ENCODE measurements at regions of chr10 and their contacts with region 1.

Region 1: DNA sequence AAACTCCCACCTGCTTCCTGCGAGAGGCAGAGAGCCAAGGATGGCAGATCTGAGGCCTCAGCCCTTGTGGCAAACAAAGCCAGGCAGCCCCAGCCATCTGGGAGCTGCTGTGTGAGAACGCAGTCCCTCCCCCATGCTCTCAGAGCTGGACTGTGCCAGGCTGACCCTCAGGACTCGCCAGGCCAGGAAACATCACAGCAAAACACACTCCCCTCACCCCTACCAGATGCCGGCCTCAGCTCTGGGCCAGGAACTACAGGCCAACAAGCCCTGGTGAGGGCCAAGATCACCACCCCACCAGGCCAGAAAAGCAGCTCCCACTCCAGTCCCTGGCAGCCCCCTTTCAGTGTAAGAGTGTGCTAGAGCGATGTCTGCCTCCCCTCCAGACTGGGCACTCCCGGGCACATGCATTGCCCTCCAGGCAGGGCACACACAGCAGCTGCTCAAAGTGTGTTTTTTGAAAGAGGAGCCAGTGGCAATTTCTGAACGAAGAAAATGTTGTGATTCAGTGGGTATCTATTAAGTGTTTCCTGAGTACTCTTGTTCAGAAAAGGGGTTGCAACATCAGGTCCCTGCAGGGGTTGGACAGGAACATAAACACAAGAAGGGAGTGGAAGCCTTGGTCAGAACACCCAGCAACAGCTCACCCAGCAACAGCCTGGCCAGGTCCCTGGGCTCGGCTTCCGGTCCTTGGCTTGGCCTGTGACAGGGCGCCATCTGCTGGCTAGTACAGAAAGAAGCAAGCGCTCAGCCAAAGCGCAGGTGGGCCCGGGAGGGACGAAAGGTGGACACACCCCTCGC is 18.3 kb downstream of the LRRC20 start:
- DNase-seq: peak; percentile 88
- ATAC-seq: peak; percentile 97
- H3K4me3 ChIP-seq: no peak overlapping the region
- H3K4me3 Mint-ChIP-seq: no peak overlapping the region
- H3K27ac ChIP-seq: no peak overlapping the region
- H3K27ac Mint-ChIP-seq: no peak overlapping the region
- H3K4me1 ChIP-seq: peaks cover 2 to 11% of the 10 kb centered on the region in 2 donors
- H3K4me1 Mint-ChIP-seq: peaks cover 10% of the 10 kb centered on the region
- H3K27me3 ChIP-seq: no peaks in the 10 kb centered on the region
- H3K27me3 Mint-ChIP-seq: peaks cover 3% of the 10 kb centered on the region
- CTCF ChIP-seq: peak; percentile 85

Region 2: DNA sequence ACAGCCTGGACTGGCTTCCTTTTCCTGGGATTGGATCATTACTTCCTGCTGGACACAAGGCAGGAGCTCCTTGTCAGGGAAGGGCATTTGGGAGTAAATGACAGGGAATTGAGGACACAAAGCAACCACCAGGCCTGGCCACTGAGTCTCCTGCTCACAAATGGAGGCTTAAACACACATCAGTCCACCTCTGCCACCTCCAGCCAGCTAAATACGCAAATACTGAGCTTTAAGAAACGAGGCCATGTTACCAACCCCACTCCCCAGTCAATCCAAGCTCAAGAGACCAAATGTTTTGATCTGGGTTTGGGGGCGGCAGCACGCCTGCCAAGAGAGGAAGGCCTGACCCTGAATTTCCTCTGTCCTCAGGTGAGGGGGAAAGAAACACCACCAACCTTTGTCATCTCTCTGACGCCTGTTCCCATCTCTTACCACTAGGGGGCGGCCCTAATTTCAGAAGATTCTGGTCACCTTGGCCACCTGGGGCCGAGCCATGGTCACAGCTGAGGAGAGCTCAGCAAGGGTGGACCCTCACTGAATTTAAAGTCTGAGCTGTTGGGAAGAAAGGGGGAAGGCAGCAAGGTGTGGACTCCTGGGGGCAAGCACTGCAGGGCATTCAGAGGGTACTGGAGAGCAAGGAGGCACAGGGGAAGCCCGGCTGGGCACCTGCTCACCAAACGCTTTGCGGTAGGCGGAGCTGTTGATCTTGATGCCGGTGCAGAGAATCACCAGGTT is 248.1 kb before region 1 on chr10:
- CTCF ChIA-PET with region 1: interaction called, 10 read pairs
- POLR2A ChIA-PET with region 1: no interaction called
- intact Hi-C with region 1: no loop called
- DNase-seq: peak; percentile 71
- ATAC-seq: peak; percentile 83
- H3K4me3 ChIP-seq: no peak overlapping the region
- H3K4me3 Mint-ChIP-seq: no peak overlapping the region
- H3K27ac ChIP-seq: no peak overlapping the region
- H3K27ac Mint-ChIP-seq: no peak overlapping the region
- H3K4me1 ChIP-seq: peaks cover 0 to 4% of the 10 kb centered on the region in 2 donors
- H3K4me1 Mint-ChIP-seq: peaks cover 6% of the 10 kb centered on the region
- H3K27me3 ChIP-seq: no peaks in the 10 kb centered on the region
- H3K27me3 Mint-ChIP-seq: no peaks in the 10 kb centered on the region
- CTCF ChIP-seq: peak; percentile 98

Region 3: DNA sequence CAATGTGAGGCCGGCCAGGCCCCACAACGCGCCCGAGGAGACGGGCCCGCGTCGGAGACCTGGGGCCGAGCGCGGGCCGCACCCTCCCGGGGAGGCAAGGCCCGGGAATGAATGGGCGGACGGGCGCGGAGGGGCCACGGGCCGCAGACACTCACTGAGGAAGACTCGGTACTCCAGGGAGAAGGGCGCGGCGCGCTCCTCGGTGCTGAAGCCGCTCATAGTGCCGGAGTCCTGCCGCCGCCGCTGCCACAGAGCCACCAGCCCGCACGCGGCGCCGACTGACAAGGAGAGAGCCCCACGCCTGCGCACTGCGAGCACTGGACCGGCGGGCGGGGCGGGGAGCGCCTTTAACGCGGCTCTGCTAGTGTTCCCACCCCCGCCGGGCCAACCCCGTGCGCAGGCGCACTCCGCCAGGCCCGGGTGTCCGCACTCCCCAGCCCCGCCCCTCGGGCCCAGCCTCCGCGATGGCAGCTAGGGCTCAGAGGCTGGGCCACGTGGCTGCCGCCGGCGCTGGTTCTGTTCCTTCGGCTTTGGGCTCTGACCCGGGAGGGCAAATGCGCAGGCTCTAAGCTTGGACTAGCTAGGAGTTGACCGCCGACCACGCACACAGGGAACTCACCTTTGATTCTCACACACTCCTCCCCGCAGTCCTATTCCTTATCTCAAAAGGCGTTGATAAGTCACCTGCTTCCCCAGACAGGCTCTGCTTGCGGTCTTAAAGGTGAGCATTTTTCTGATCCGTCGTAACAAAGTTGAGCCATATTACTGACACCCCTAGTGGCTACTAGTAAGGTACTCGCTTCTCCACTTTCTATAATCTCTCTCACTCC is 130.8 kb before region 1 on chr10 and contains the start of gene PPA1:
- CTCF ChIA-PET with region 1: interaction called, 778 read pairs
- POLR2A ChIA-PET with region 1: no interaction called
- intact Hi-C with region 1: loop called (anchors 1 kb)
- DNase-seq: peak; percentile 98
- ATAC-seq: peak; percentile 97
- H3K4me3 ChIP-seq: peak within 1 kb of the TSS; percentile 50 to 95 (median 87)
- H3K4me3 Mint-ChIP-seq: peak within 1 kb of the TSS; percentile 92
- H3K27ac ChIP-seq: peak within 1 kb of the TSS; percentile 75 to 77
- H3K27ac Mint-ChIP-seq: peak within 1 kb of the TSS; percentile 93
- H3K4me1 ChIP-seq: peaks cover 7 to 18% of the 10 kb centered on the region in 2 donors
- H3K4me1 Mint-ChIP-seq: peaks cover 13% of the 10 kb centered on the region
- H3K27me3 ChIP-seq: no peaks in the 10 kb centered on the region
- H3K27me3 Mint-ChIP-seq: no peaks in the 10 kb centered on the region
- CTCF ChIP-seq: peak; percentile 49
- total RNA-seq, gene PPA1: 39.4 and 40.6 TPM in 2 replicates

Region 4: DNA sequence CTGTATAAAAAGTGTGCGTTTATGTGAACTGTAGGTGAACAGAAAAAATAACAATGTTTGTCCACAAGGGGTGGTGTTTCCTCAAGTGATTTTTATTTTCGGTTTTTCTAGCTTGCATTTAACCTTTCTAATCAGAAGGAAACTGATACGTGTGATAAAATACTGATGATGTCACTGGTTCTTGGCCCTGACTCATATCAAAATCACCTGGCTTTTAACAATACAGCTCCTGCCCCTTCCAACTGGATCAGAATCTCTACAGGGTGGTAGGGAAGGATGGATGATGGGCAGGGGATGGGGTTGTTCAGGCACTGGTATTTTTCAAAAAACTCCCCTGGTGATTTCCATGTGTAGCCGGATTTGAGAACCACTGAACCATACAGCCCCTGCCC is 91.2 kb before region 1 on chr10:
- CTCF ChIA-PET with region 1: interaction called, 185 read pairs
- POLR2A ChIA-PET with region 1: no interaction called
- intact Hi-C with region 1: loop called (anchors 1 kb)
- DNase-seq: peak; percentile 65
- ATAC-seq: peak; percentile 67
- H3K4me3 ChIP-seq: peak overlapping the region in 1 of 5 experiments; percentile 44
- H3K4me3 Mint-ChIP-seq: peak overlapping the region; percentile 54
- H3K27ac ChIP-seq: no peak overlapping the region
- H3K27ac Mint-ChIP-seq: peak overlapping the region; percentile 57
- H3K4me1 ChIP-seq: peaks cover 6 to 11% of the 10 kb centered on the region in 2 donors
- H3K4me1 Mint-ChIP-seq: peaks cover 15% of the 10 kb centered on the region
- H3K27me3 ChIP-seq: no peaks in the 10 kb centered on the region
- H3K27me3 Mint-ChIP-seq: no peaks in the 10 kb centered on the region
- CTCF ChIP-seq: peak; percentile 71

Region 5: DNA sequence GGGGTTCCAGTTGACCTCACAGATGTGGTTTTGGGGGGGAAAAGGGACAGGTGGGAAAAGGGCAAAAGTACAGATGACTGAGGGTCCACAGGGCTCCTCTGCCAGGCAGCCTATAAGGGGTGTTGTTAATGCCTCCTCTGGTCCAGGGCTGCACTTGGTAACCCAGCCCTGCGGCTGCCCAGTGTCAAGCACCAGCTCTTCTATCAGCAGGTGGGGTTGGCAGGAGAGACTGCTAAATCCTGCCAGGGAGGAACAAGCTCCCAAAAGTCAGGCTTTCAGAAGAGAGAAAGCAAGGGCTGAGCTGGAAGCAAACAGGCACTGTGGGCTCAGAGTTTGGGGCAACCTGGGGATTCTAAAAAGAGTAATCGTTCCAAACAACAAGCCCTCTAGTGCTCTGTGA is 20.9 kb before region 1 on chr10:
- CTCF ChIA-PET with region 1: interaction called, 14 read pairs
- POLR2A ChIA-PET with region 1: no interaction called
- intact Hi-C with region 1: no loop called
- DNase-seq: no peak
- ATAC-seq: no peak
- H3K4me3 ChIP-seq: no peak overlapping the region
- H3K4me3 Mint-ChIP-seq: no peak overlapping the region
- H3K27ac ChIP-seq: no peak overlapping the region
- H3K27ac Mint-ChIP-seq: no peak overlapping the region
- H3K4me1 ChIP-seq: no peaks in the 10 kb centered on the region
- H3K4me1 Mint-ChIP-seq: no peaks in the 10 kb centered on the region
- H3K27me3 ChIP-seq: peaks cover 0 to 15% (median 0%) of the 10 kb centered on the region in 4 experiments
- H3K27me3 Mint-ChIP-seq: peaks cover 8% of the 10 kb centered on the region
- CTCF ChIP-seq: no peak

Region 6: GRCh38 chr10:70376436-70377378 is 12.5 kb after region 1 on chr10:
- CTCF ChIA-PET with region 1: interaction called, 25 read pairs
- POLR2A ChIA-PET with region 1: no interaction called
- intact Hi-C with region 1: no loop called
- DNase-seq: no peak
- ATAC-seq: no peak
- H3K4me3 ChIP-seq: no peak overlapping the region
- H3K4me3 Mint-ChIP-seq: no peak overlapping the region
- H3K27ac ChIP-seq: no peak overlapping the region
- H3K27ac Mint-ChIP-seq: no peak overlapping the region
- H3K4me1 ChIP-seq: peaks cover 4 to 5% of the 10 kb centered on the region in 2 donors
- H3K4me1 Mint-ChIP-seq: peaks cover 8% of the 10 kb centered on the region
- H3K27me3 ChIP-seq: peaks cover 0 to 15% (median under 1%) of the 10 kb centered on the region in 4 experiments
- H3K27me3 Mint-ChIP-seq: no peaks in the 10 kb centered on the region
- CTCF ChIP-seq: no peak

Region 7: DNA sequence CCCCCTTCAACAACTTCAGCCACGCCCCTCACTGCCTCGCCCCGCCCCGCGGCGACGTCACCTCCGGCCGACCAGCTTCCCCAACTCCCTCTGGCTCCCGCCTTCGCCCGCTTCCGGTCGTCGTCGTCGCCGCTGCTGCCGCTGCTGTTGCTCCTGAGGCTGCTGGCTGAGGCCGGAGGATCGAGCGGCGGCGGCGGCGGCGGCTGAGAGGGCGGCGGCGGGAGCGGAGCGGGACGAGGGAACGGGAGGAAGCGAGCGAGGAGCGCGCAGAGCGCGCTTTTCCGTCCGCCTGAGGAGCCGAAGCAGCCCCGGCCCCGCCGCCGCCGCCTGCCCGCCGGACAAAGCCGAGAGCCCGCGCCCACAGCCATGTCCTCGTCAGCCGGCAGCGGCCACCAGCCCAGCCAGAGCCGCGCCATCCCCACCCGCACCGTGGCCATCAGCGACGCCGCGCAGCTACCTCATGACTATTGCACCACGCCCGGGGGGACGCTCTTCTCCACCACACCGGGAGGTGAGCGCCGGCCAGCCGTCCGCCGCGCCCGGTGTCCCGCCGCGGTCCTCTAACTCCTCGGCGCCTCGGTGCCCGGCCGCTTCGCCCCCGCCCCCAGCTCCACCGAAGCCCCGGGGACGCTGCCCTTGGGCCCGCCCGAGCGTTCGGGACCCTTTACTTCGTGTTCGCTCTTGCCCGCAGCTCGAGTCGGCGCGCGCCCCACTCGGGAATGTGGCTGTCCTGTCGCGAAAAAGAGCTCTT is 40.0 kb after region 1 on chr10 and contains the start of gene EIF4EBP2:
- CTCF ChIA-PET with region 1: interaction called, 17 read pairs
- POLR2A ChIA-PET with region 1: no interaction called
- intact Hi-C with region 1: loop called (anchors 5 kb)
- DNase-seq: peak; percentile 97
- ATAC-seq: peak; percentile 99
- H3K4me3 ChIP-seq: peak within 1 kb of the TSS; percentile 53 to 88 (median 77)
- H3K4me3 Mint-ChIP-seq: peak within 1 kb of the TSS; percentile 94
- H3K27ac ChIP-seq: peak within 1 kb of the TSS; percentile 11 to 84
- H3K27ac Mint-ChIP-seq: peak within 1 kb of the TSS; percentile 96
- H3K4me1 ChIP-seq: peaks cover 23 to 24% of the 10 kb centered on the region in 2 donors
- H3K4me1 Mint-ChIP-seq: peaks cover 43% of the 10 kb centered on the region
- H3K27me3 ChIP-seq: no peaks in the 10 kb centered on the region
- H3K27me3 Mint-ChIP-seq: no peaks in the 10 kb centered on the region
- CTCF ChIP-seq: no peak
- total RNA-seq, gene EIF4EBP2: 37.8 and 38.2 TPM in 2 replicates

Region 8: GRCh38 chr10:70753841-70754621 is 389.9 kb after region 1 on chr10:
- CTCF ChIA-PET with region 1: no interaction called
- POLR2A ChIA-PET with region 1: no interaction called
- intact Hi-C with region 1: no loop called
- DNase-seq: no peak
- ATAC-seq: no peak
- H3K4me3 ChIP-seq: no peak overlapping the region
- H3K4me3 Mint-ChIP-seq: no peak overlapping the region
- H3K27ac ChIP-seq: no peak overlapping the region
- H3K27ac Mint-ChIP-seq: no peak overlapping the region
- H3K4me1 ChIP-seq: no peaks in the 10 kb centered on the region
- H3K4me1 Mint-ChIP-seq: no peaks in the 10 kb centered on the region
- H3K27me3 ChIP-seq: no peaks in the 10 kb centered on the region
- H3K27me3 Mint-ChIP-seq: no peaks in the 10 kb centered on the region
- CTCF ChIP-seq: no peak

Measured in B cell (primary cell).